ENCODE measurements at regions of chr2 and their contacts with region 1.

Region 1: DNA sequence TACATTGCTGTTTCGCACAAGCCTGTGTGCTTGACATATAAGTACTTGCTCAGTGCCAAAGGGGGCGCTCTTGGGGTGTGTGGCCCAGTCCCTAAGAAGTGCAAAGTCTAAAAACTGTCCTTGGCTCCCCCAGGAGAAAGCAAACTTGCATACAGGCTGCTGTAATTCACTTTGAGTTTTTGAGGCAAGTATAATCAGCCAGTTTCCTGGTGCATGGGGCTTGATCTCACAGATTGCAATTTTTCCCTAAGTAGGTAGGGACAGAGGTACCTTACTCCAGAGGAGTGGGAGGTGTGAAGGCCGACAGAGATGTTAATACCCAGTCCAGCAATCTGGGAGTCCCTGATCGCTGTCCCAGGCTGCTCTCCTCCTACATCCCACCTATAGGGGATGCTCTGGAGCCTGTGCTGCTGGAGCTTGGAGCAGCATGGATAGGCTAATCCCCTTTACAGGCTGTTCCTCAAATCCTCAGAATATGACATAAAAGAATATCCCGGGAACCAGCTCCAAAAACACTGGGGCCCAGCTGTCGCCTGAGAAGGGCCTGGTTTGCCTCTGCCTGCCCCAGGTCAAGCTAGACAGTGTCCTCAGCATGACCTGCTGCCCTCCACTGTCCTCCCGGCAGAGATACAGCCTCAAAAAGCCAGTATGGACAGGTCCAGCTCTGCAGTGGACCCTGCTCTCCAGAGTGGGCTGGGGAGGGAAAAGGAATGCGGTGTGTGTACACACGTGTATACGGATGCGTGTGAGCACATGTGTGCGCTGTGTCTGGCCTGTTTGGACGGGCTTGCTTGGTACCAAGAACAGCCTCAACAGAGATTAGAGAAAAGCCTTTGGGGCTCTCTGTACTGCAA is 136.5 kb upstream of the HAAO start:
- DNase-seq: peak; percentile 90
- ATAC-seq: peak; percentile 54
- H3K4me3 ChIP-seq: peak overlapping the region; percentile 52 to 74 (median 62)
- H3K27ac ChIP-seq: peak overlapping the region; percentile 88
- H3K4me1 ChIP-seq: peaks cover 98% of the 10 kb centered on the region
- H3K27me3 ChIP-seq: no peaks in the 10 kb centered on the region
- CTCF ChIP-seq: peak; percentile 78
- EP300 ChIP-seq: peak in 1 of 2 experiments; percentile 70; a peak in 1 of 4 replicates
- POLR2A ChIP-seq: no peak
- RAD21 ChIP-seq: no peak

Region 2: DNA sequence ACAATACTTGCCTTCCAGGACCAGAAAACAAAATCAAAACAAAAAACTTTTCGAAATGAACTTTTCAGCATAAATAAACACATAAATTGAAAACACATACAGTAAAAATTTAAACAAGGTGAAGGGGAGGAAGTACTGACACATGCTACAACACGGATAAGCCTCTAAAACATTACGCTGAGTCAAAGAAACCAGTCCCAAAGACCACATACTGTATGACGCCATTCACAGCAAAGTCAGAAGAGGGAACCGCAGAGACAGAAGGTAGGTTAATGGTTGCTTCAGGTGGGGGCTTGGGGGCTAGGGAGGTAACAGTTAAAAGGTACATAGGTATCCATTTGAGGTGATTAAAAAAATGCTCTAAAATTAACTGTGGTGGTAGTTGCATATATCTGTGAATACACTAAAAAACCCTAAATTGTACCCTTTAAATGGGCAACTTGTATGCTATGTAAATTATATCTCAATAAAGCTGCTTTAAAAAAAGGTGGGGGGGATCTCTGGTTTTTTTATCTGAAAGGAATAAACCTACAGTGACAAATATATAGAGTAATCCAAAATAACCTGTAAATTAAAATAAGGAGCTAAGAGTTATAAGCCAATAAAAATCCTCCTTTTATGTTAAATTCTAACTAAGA is 575.0 kb before region 1 on chr2:
- CTCF ChIA-PET with region 1: no interaction called
- POLR2A ChIA-PET with region 1: no interaction called
- in situ Hi-C with region 1: no loop called
- intact Hi-C with region 1: no loop called
- DNase-seq: no peak
- ATAC-seq: no peak
- H3K4me3 ChIP-seq: no peak overlapping the region
- H3K27ac ChIP-seq: no peak overlapping the region
- H3K4me1 ChIP-seq: peaks cover 44% of the 10 kb centered on the region
- H3K27me3 ChIP-seq: no peaks in the 10 kb centered on the region
- CTCF ChIP-seq: no peak
- EP300 ChIP-seq: no peak
- POLR2A ChIP-seq: no peak
- RAD21 ChIP-seq: no peak

Region 3: GRCh38 chr2:42810121-42810970 is 118.6 kb before region 1 on chr2:
- CTCF ChIA-PET with region 1: no interaction called
- POLR2A ChIA-PET with region 1: interaction called, 19 read pairs
- in situ Hi-C with region 1: no loop called
- intact Hi-C with region 1: no loop called
- DNase-seq: peak; percentile 94
- ATAC-seq: peak; percentile 84
- H3K4me3 ChIP-seq: peak overlapping the region; percentile 79 to 93 (median 80)
- H3K27ac ChIP-seq: peak overlapping the region; percentile 98
- H3K4me1 ChIP-seq: peaks cover 19% of the 10 kb centered on the region
- H3K27me3 ChIP-seq: no peaks in the 10 kb centered on the region; a peak in 2 of 5 replicates
- CTCF ChIP-seq: 0 out of 2 replicates have a peak, but pooled peaks have one; percentile 31
- EP300 ChIP-seq: peak; percentile 34 to 36; a peak in 2 of 4 replicates
- POLR2A ChIP-seq: peak; percentile 82 to 95
- RAD21 ChIP-seq: peak; percentile 52; the same call in 1 of the 2 replicates

Region 4: GRCh38 chr2:42906557-42907411 is 22.1 kb before region 1 on chr2:
- CTCF ChIA-PET with region 1: no interaction called
- POLR2A ChIA-PET with region 1: interaction called, 15 read pairs
- in situ Hi-C with region 1: no loop called
- intact Hi-C with region 1: no loop called
- DNase-seq: no peak
- ATAC-seq: peak; percentile 74
- H3K4me3 ChIP-seq: peak overlapping the region; percentile 49 to 62 (median 51)
- H3K27ac ChIP-seq: no peak overlapping the region
- H3K4me1 ChIP-seq: peaks cover 41% of the 10 kb centered on the region
- H3K27me3 ChIP-seq: peaks cover 9 to 69% of the 10 kb centered on the region in 2 experiments; a peak in 4 of 5 replicates
- CTCF ChIP-seq: no peak
- EP300 ChIP-seq: no peak
- POLR2A ChIP-seq: no peak
- RAD21 ChIP-seq: no peak

Region 5: GRCh38 chr2:42917425-42917927 is 11.4 kb before region 1 on chr2:
- CTCF ChIA-PET with region 1: no interaction called
- POLR2A ChIA-PET with region 1: interaction called, 26 read pairs
- in situ Hi-C with region 1: no loop called
- intact Hi-C with region 1: no loop called
- DNase-seq: no peak
- ATAC-seq: no peak
- H3K4me3 ChIP-seq: no peak overlapping the region
- H3K27ac ChIP-seq: no peak overlapping the region
- H3K4me1 ChIP-seq: peaks cover 44% of the 10 kb centered on the region
- H3K27me3 ChIP-seq: peaks cover 0 to 27% of the 10 kb centered on the region in 2 experiments; a peak in 2 of 5 replicates
- CTCF ChIP-seq: no peak
- EP300 ChIP-seq: no peak
- POLR2A ChIP-seq: no peak
- RAD21 ChIP-seq: no peak

Region 6: DNA sequence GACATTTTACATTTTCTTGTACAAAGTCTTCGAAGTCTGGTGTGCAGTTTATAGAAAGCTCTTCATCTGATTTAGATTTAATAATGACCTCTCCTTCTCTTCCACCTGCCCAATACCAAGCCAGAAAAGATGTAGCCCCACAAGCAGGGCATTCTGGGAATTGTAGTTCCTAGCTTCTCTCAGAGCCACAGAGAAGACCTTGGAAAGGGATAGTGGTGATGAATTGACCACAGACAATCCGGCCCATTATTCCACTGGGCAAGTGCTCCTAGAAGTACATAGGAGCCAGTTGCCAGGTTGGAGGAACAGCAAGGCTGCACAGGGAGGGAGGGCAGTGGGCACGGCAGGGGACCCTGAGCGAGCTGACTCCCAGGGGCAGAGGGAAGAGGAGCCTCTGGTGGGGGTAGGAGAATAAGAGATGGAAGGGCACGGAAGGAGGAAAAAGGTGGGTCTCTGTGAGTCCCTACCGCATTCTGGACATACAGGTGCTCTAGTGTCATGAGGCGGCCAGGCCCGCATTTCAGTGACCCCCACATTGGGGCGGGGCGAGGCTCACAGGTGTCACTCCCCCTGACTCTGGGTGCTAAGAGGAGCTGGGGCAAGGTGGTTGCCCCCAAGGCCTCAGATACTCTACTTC is 16.0 kb after region 1 on chr2:
- CTCF ChIA-PET with region 1: interaction called, 4 read pairs
- POLR2A ChIA-PET with region 1: interaction called, 169 read pairs
- in situ Hi-C with region 1: no loop called
- intact Hi-C with region 1: loop called (anchors 2 kb)
- DNase-seq: peak; percentile 59
- ATAC-seq: 0 out of 3 replicates have a peak, but pooled peaks have one; percentile 4
- H3K4me3 ChIP-seq: no peak overlapping the region
- H3K27ac ChIP-seq: no peak overlapping the region
- H3K4me1 ChIP-seq: peaks cover 95% of the 10 kb centered on the region
- H3K27me3 ChIP-seq: no peaks in the 10 kb centered on the region
- CTCF ChIP-seq: no peak
- EP300 ChIP-seq: no peak
- POLR2A ChIP-seq: no peak
- RAD21 ChIP-seq: no peak

Region 7: DNA sequence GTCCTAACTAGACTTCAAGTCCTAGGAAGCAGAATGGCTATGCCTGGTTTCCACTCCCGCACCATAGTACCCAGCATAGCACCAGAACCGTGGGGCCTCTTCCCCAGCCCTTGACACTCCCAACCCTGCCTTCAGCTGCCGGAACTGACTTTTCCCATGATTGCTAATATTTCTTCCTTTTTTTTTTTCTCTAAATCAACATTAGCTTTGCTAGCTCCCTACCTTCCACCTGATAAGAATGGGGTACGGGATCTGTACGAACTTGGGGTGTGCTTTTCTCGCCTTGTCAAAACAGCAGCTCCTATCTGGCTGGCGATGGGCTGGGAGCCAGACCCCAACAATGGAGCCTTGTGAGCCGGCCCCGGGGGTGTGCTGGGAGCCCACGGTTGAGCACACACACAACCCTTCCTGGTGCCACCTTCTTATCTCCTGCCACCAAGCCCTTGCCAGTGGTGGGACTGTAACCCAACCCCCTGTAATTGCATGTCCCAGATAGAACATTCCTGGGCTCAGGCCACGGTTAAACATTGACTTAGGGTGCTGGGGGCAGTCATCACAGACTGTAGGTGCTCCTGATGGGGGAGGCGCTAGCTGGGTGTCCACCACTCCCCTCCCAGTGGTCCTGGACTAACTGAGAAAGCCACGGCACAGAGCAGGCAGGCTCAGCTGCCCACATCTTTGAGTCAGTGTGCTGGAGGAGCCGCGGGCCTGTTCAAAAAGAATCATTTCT is 76.5 kb after region 1 on chr2:
- CTCF ChIA-PET with region 1: no interaction called
- POLR2A ChIA-PET with region 1: interaction called, 10 read pairs
- in situ Hi-C with region 1: no loop called
- intact Hi-C with region 1: no loop called
- DNase-seq: peak; percentile 99
- ATAC-seq: peak; percentile 96
- H3K4me3 ChIP-seq: peak overlapping the region; percentile 27 to 67 (median 39); a peak in 5 of 6 replicates
- H3K27ac ChIP-seq: peak overlapping the region; percentile 75
- H3K4me1 ChIP-seq: peaks cover 85% of the 10 kb centered on the region
- H3K27me3 ChIP-seq: no peaks in the 10 kb centered on the region
- CTCF ChIP-seq: peak; percentile 54
- EP300 ChIP-seq: peak in 1 of 2 experiments; percentile 90; a peak in 2 of 4 replicates
- POLR2A ChIP-seq: peak; percentile 36 to 92; a peak in 3 of 4 replicates
- RAD21 ChIP-seq: no peak

Measured in HepG2 (cell line).